ENCODE measurements at regions of chr5 and their contacts with region 1.

Region 1: DNA sequence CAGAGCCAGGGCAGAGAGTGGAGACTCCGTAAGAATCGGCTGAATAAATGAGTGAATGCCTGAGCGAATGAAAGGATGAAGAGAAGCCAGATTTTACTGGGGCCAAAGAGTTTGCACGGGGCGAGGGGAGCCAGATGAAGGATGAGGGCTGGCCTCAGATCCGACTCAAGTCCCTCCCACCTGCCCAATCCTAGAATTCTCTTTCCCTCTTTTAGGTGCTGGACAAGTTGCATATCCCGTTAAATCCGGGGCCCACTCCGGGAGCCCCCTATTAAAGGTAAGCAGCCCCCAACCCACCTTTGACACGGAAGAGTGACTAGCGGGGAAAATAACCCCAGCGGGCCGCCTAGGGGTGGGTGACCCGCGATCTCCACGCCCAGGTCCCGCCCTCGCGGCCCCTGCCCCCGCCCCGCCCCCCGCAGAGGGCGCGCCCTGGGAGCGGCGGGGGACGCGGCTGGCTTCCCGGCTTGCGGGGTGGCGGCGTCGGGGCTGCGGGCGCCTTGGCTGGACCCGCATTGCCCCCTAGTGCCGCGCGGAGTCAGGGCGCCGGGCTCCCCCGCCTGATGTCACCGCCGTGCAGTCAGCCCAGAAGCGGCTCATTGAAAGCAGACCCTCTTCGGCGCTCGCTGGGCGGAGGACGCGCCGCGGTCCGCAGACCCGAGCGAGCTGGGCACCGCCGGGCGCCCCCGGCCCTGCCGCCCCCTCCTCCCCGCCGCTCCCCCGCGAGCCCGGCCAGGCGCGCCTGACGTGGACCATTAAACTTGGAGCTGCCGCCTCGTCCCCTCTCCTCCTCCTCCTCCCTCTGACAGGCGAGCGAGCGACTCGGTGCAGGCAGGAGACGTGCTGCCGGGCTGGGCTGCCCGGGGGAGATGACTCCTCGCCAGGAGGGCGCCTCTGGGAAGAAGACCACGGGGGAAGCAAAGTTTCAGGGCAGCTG is at the start of gene ADRA1B:
- DNase-seq: peak; percentile 73 to 82
- H3K4me3 ChIP-seq: peak within 1 kb of the TSS; percentile 20 to 47
- H3K27ac ChIP-seq: peak within 1 kb of the TSS; percentile 35 to 79
- H3K4me1 ChIP-seq: no peaks in the 10 kb centered on the region
- H3K27me3 ChIP-seq: no peaks in the 10 kb centered on the region
- CTCF ChIP-seq: peak; percentile 53 to 91 (median 84)
- POLR2A ChIP-seq: peak in 1 of 2 donors; percentile 23
- total RNA-seq, gene ADRA1B: under 0.01 to 5.2 (median 1.2) TPM in 3 of 4 donors, not detected in the other

Region 2: DNA sequence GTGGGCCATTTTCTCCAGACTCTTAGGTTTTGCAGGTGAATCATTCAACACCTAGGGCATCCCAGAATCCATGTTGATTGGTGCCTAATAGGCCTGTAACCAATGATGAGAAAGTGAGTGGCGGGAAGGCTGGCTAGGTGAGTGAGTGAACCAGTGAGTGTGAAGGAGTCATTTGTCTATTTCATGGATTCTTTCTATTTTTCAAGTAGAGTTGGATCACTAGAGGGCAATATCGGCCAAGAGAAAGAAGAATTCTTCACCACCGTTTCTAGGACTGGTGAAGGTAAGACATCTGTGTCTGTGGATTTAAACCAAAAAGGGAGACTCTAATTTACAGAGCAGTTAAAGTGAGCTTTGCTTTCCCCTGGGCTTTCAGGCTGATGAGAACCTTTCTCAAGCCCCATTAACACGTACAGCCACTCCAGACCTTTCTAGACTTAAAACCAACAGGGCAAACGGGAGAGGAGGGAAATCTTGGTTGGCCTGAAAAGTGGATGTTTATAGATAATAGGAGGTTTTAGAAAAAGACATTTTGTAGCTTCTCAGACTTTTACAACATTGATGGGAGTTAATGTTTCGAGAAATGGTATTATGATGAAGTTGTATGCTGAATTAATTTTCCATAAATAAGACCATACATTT is 471.6 kb before region 1 on chr5:
- intact Hi-C with region 1: loop called (anchors 10 kb)
- DNase-seq: no peak
- H3K4me3 ChIP-seq: no peak overlapping the region
- H3K27ac ChIP-seq: no peak overlapping the region
- H3K4me1 ChIP-seq: no peaks in the 10 kb centered on the region
- H3K27me3 ChIP-seq: no peaks in the 10 kb centered on the region
- CTCF ChIP-seq: peak; percentile 55 to 80 (median 63)
- POLR2A ChIP-seq: no peak

Region 3: DNA sequence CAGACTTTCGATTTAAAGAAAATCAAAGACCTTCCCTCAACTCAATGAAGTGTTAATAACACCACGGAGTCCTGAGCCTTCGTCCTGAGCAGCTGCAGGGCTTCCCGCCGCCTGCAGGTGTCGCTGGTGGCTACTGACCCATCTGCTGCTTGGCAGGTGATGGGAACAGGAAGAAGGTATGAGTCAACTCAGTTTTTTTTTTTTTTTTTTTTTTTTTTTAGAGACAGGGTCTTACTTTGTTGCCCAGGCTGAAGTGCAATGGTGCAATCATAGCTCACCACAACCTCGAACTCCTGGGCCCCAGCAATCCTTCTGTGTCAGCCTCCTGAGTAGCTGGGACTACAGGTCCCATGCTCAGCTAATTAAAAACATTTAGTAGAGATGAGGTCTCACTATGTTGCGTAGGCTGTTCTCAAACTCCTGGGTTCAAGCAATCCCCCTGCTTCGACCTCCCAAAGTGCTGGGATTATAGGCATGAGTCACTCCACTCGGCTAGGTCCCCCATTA is 400.2 kb before region 1 on chr5:
- intact Hi-C with region 1: loop called (anchors 10 kb)
- DNase-seq: peak; percentile 30 to 65
- H3K4me3 ChIP-seq: no peak overlapping the region
- H3K27ac ChIP-seq: no peak overlapping the region
- H3K4me1 ChIP-seq: no peaks in the 10 kb centered on the region
- H3K27me3 ChIP-seq: no peaks in the 10 kb centered on the region
- CTCF ChIP-seq: peak; percentile 37 to 62 (median 48)
- POLR2A ChIP-seq: no peak

Region 4: GRCh38 chr5:159773062-159773924 is 142.9 kb before region 1 on chr5:
- intact Hi-C with region 1: loop called (anchors 10 kb)
- DNase-seq: peak; percentile 89 to 90
- H3K4me3 ChIP-seq: peak overlapping the region in 1 of 2 donors; percentile 32
- H3K27ac ChIP-seq: peak overlapping the region; percentile 64 to 86
- H3K4me1 ChIP-seq: no peaks in the 10 kb centered on the region
- H3K27me3 ChIP-seq: no peaks in the 10 kb centered on the region
- CTCF ChIP-seq: peak in 2 of 4 experiments; percentile 3 to 21
- POLR2A ChIP-seq: peak; percentile 17 to 58